HepG2 (cell line): ENCODE measurements at regions of chr10 and their contacts with region 1.

Region 1: DNA sequence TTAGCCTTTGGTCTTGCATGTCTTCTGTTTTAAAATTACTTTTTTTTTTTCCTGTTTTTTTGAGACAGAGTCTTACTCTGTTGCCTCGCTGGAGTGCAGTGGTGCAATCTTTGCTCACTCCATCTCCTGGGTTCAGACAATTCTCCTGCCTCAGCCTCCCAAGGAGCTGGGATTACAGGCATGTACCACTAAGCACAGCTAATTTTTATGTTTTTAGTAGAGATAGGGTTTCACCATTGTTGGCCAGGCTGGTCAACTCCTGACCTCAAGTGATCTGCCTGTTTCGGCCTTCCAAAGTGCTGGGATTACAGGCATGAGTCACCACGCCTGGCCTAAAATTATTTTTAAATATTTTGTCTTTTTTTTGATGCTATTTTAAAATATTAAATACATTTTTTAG is 38.5 kb downstream of the MLLT10 start:
- DNase-seq: no peak
- ATAC-seq: no peak
- H3K4me3 ChIP-seq: no peak overlapping the region
- H3K27ac ChIP-seq: peak overlapping the region; percentile 39
- H3K4me1 ChIP-seq: peaks cover 69% of the 10 kb centered on the region
- H3K27me3 ChIP-seq: no peaks in the 10 kb centered on the region
- CTCF ChIP-seq: no peak
- EP300 ChIP-seq: no peak
- POLR2A ChIP-seq: no peak
- RAD21 ChIP-seq: no peak

Region 2: GRCh38 chr10:21525367-21526183 is 47.0 kb before region 1 on chr10 and contains the start of gene SKIDA1:
- CTCF ChIA-PET with region 1: no interaction called
- POLR2A ChIA-PET with region 1: interaction called, 12 read pairs
- in situ Hi-C with region 1: no loop called
- intact Hi-C with region 1: no loop called
- DNase-seq: peak; percentile 92
- ATAC-seq: peak; percentile 74
- H3K4me3 ChIP-seq: peak within 1 kb of the TSS; percentile 51 to 79 (median 77)
- H3K27ac ChIP-seq: peak within 1 kb of the TSS; percentile 95
- H3K4me1 ChIP-seq: peaks cover 38% of the 10 kb centered on the region
- H3K27me3 ChIP-seq: no peaks in the 10 kb centered on the region
- CTCF ChIP-seq: no peak; the same call in 1 of the 2 replicates
- EP300 ChIP-seq: peak; percentile 13 to 45; a peak in 2 of 4 replicates
- POLR2A ChIP-seq: peak in 1 of 2 experiments; percentile 78; a peak in 2 of 4 replicates
- RAD21 ChIP-seq: peak; percentile 63; the same call in 1 of the 2 replicates
- total RNA-seq, gene SKIDA1: 1.4 and 1.5 TPM in 2 replicates

Region 3: GRCh38 chr10:21614000-21614399 is 41.4 kb after region 1 on chr10:
- CTCF ChIA-PET with region 1: no interaction called
- POLR2A ChIA-PET with region 1: no interaction called
- in situ Hi-C with region 1: no loop called
- intact Hi-C with region 1: loop called (anchors 5 kb)
- DNase-seq: no peak
- ATAC-seq: no peak
- H3K4me3 ChIP-seq: no peak overlapping the region
- H3K27ac ChIP-seq: no peak overlapping the region
- H3K4me1 ChIP-seq: peaks cover 4% of the 10 kb centered on the region; the same call in 1 of the 2 replicates
- H3K27me3 ChIP-seq: no peaks in the 10 kb centered on the region
- CTCF ChIP-seq: no peak
- EP300 ChIP-seq: no peak
- POLR2A ChIP-seq: no peak
- RAD21 ChIP-seq: no peak